ENCODE measurements at regions of chr16 and their contacts with region 1.

Region 1: GRCh38 chr16:4616047-4616811 is 1.5 kb upstream of the UBALD1 start:
- DNase-seq: peak; percentile 100
- H3K4me3 Mint-ChIP-seq: peak overlapping the region; percentile 84
- H3K27ac Mint-ChIP-seq: peak overlapping the region; percentile 96
- H3K4me1 Mint-ChIP-seq: peaks cover 12% of the 10 kb centered on the region
- H3K27me3 Mint-ChIP-seq: no peaks in the 10 kb centered on the region

Region 2: DNA sequence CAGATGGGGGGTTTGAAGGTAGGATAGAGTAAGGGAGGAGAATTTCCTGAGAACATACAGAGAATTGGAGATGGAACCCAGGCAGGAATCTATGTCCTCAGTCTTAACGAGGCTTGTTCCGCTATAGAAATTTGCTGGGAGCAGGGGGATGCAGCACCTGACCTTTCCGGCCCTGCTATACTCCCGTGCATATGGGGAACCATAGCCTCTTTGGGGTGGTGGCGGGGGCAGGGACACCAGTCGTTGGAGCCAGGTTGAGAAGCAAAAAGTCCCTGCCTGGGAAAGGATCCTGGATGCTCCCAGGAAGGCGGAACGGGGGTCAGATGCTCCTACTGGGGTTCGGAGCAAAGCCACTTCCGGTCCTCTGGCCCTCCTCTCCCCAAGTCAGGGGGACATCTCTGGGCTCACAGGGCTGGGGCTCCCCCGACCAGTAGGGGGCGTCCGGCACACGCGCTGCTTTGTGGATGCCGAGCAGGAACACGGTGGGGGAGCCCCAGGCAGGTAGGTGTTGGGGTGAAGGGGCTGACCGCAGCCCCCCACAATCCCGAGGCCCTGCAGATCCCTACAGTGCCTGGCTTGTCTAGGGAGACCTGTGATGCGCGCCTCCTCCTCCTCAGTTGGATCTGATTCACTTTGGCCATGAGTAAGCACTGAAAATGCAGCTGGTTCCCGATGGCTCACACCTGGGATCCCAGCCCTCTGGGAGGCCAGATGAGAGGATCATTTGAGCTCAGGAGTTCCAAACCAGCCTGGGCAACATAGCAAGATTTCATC is 327.9 kb before region 1 on chr16:
- intact Hi-C with region 1: no loop called
- DNase-seq: peak; percentile 95
- H3K4me3 Mint-ChIP-seq: no peak overlapping the region
- H3K27ac Mint-ChIP-seq: no peak overlapping the region
- H3K4me1 Mint-ChIP-seq: peaks cover 12% of the 10 kb centered on the region
- H3K27me3 Mint-ChIP-seq: peaks cover 9% of the 10 kb centered on the region

Region 3: DNA sequence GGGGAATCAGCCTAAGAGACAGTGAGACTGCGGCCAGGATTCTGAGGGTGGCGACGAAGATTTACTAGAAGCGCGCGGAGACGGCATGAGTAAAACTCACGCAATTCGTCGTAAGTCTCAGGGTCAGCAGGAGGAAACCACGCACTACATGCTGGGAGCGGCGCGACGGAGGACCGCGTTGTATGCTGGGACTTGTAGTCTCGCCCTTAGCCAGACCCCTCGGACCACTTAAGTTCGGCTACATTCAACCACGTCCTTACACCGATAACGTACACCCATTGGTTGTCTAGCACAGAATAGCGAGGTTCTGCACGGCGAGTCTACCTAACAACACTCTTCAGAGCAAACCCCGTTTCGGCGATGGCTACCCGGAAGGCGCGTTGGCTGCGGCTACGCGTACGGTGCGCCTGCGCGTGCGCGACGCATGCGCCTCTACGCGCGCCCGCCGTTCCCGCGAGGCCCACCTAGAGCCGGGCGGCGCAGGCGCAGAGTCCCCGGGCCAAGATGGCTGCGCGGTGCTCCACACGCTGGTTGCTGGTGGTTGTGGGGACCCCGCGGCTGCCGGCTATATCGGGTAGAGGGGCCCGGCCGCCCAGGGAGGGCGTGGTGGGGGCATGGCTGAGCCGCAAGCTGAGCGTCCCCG is 190.7 kb before region 1 on chr16 and contains the start of gene DNAJA3:
- intact Hi-C with region 1: loop called (anchors 5 kb)
- DNase-seq: peak; percentile 98
- H3K4me3 Mint-ChIP-seq: peak within 1 kb of the TSS; percentile 100
- H3K27ac Mint-ChIP-seq: peak within 1 kb of the TSS; percentile 100
- H3K4me1 Mint-ChIP-seq: peaks cover 29% of the 10 kb centered on the region
- H3K27me3 Mint-ChIP-seq: peaks cover 3% of the 10 kb centered on the region
- total RNA-seq, gene DNAJA3: 106 and 108 TPM in 2 replicates

Region 4: DNA sequence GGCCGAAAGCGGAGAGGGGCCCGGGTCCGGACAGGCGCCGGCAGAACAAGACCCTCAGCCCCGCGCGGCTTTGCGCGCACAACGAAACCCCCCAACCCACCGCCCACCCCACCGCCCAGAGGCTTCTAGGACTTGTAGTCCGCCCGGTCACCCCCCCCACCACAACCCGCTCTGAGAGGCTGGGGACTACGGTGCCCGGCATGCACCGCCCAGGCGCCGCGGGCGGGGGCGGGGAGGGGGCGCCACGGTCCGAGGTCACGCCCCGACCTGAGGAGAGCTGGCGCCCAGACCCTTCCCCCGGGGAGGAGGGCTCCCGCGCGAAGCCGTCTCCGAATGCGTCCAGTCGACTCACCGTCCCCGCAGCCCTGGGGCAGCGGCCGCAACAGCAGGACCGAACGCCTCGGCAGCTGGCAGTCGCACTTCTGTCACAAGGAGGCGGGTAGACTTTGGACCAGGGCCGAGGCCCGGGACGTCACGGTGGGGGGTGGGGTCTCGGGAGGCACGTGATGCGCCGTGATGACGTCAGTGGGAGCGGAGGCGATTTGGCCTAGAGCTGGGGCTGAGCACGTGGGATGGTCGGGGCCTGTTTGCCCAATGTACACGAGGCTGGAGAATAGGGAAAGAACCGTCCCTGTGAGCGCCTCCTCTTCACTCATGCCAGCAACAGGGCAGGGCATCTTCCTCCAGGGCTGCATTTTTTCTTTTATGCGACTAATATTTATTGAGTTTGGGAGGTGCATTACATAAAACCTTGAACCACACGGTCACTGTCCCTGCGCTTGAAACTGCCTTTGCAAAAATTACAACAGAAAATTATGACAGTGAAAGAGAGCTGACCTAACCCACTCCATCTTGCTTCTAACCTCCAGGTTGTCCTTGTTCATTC is 77.6 kb before region 1 on chr16 and contains the start of gene CDIP1:
- intact Hi-C with region 1: loop called (anchors 5 kb)
- DNase-seq: peak; percentile 97
- H3K4me3 Mint-ChIP-seq: peak within 1 kb of the TSS; percentile 85
- H3K27ac Mint-ChIP-seq: peak within 1 kb of the TSS; percentile 89
- H3K4me1 Mint-ChIP-seq: peaks cover 31% of the 10 kb centered on the region
- H3K27me3 Mint-ChIP-seq: peaks cover 4% of the 10 kb centered on the region
- total RNA-seq, gene CDIP1: 49.4 and 55.2 TPM in 2 replicates

Region 5: GRCh38 chr16:4693296-4693955 is 77.2 kb after region 1 on chr16 and contains the start of gene NUDT16L1:
- intact Hi-C with region 1: loop called (anchors 1 kb)
- DNase-seq: peak; percentile 100
- H3K4me3 Mint-ChIP-seq: peak within 1 kb of the TSS; percentile 84
- H3K27ac Mint-ChIP-seq: peak within 1 kb of the TSS; percentile 78
- H3K4me1 Mint-ChIP-seq: peaks cover 11% of the 10 kb centered on the region
- H3K27me3 Mint-ChIP-seq: no peaks in the 10 kb centered on the region
- total RNA-seq, gene NUDT16L1: 35.4 and 36.1 TPM in 2 replicates

Region 6: GRCh38 chr16:4734063-4734729 is 118.0 kb after region 1 on chr16 and contains the starts of genes ANKS3 and DNAAF8:
- intact Hi-C with region 1: loop called (anchors 1 kb)
- DNase-seq: peak; percentile 96
- H3K4me3 Mint-ChIP-seq: peak within 1 kb of the TSS; percentile 93
- H3K27ac Mint-ChIP-seq: peak within 1 kb of the TSS; percentile 91
- H3K4me1 Mint-ChIP-seq: peaks cover 13% of the 10 kb centered on the region
- H3K27me3 Mint-ChIP-seq: no peaks in the 10 kb centered on the region
- total RNA-seq, gene ANKS3: 21.8 and 22.3 TPM in 2 replicates
- total RNA-seq, gene DNAAF8: not detected in 2 replicates

Region 7: DNA sequence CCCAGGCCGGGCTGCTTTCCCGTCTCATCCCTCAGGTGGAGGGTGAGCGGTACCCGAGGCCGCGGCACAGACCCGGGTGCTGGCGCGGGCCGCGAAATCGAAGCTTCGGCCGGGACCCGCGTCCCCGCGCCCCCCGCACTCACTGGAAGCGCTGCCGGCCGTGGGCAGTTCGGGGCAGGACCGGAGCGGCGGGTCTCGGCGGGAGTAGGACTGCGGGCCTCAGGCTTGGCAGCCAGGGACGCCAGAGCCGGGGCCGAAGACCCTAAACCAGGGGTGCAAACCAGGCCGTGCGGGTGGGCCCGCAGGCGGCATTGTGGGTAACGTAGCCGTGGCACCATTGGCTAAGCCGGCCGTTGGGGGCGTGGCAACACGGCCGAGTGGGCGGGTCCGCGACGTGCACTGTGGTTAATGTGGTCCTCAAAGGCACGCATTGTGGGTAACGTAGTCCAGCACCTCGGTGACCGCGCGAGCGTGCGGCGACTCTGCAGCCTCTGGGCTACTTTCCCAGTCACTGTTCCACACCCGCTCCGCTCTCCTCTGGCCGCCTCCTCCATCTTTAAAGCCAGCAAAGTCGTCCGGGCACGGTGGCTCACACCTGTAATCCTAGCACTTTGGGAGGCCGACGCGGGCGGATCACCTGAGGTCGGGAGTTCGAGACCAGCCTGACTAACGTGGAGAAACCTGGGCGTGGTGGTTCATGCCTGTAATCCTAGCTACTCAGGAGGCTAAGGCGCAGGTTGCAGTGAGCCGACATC is 150.8 kb after region 1 on chr16 and contains the start of gene ZNF500:
- intact Hi-C with region 1: loop called (anchors 2 kb)
- DNase-seq: peak; percentile 100
- H3K4me3 Mint-ChIP-seq: peak within 1 kb of the TSS; percentile 96
- H3K27ac Mint-ChIP-seq: peak within 1 kb of the TSS; percentile 91
- H3K4me1 Mint-ChIP-seq: peaks cover 26% of the 10 kb centered on the region
- H3K27me3 Mint-ChIP-seq: no peaks in the 10 kb centered on the region
- total RNA-seq, gene ZNF500: 15.0 and 16.1 TPM in 2 replicates

Measured in activated CD4-positive, alpha-beta T cell treated with anti-CD3 and anti-CD28 coated beads, Interleukin-2, amount 10 ng/mL, durations not matched to agents 24 days and 14 days (primary cell).